ENCODE measurements at regions of chr12 and their contacts with region 1.

Region 1: GRCh38 chr12:64679487-64679983 is 69.2 kb downstream of the RASSF3 start:
- DNase-seq: peak; percentile 81
- H3K4me3 ChIP-seq: peak overlapping the region in 2 of 4 donors; percentile 5 to 27
- H3K27ac ChIP-seq: peak overlapping the region; percentile 80 to 90 (median 86)
- H3K4me1 ChIP-seq: peaks cover 55 to 83% (median 62%) of the 10 kb centered on the region in 4 donors
- H3K27me3 ChIP-seq: no peaks in the 10 kb centered on the region
- CTCF ChIP-seq: no peak
- EP300 ChIP-seq: no peak
- POLR2A ChIP-seq: no peak

Region 2: DNA sequence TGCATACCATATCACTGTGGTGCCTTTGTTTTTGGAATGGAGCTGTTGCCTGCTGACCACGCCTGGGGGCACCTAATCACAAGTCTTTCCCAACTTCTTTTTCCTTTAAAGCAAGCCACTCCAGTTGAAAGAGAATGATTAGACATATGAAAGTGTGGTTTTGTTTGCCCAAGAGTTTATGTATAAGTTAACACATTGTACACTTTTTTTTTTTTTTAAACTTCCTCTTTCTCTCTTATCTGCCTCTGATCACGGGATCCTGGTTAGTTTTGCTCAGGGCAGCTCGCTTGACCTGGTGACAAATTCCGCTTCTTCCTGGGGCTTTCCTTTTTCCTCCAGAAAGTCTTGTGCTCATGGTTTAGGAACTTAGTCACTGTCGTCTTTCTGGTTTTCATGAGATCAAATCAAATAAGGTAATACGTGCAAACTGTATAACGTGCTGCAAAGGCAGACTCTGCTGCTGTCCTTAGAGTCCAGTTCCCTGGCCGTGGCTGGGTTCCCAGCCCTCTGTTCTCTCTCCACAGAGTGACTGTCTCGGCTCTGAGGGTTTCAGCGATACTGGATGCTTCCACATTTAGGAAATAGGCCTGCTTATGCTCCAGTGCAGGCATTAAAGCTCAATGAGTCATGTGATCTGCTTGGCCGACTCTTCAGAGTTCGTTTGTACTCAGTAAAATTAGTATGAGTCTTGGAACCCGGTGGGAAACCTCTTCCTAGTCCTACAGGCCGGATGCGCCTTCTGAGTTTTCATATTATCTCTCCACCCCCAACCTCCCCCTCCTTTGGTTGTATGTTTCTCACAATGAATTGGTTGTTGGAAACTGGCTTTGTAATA is 54.1 kb before region 1 on chr12:
- in situ Hi-C with region 1: loop called in 1 of 4 experiments (anchors 10 kb)
- intact Hi-C with region 1: no loop called
- DNase-seq: peak; percentile 54
- H3K4me3 ChIP-seq: peak overlapping the region in 2 of 4 donors; percentile 12 to 44
- H3K27ac ChIP-seq: peak overlapping the region; percentile 84 to 95 (median 87)
- H3K4me1 ChIP-seq: peaks cover 32 to 84% (median 44%) of the 10 kb centered on the region in 4 donors
- H3K27me3 ChIP-seq: no peaks in the 10 kb centered on the region
- CTCF ChIP-seq: no peak
- EP300 ChIP-seq: peak; percentile 9
- POLR2A ChIP-seq: peak; percentile 39

Region 3: DNA sequence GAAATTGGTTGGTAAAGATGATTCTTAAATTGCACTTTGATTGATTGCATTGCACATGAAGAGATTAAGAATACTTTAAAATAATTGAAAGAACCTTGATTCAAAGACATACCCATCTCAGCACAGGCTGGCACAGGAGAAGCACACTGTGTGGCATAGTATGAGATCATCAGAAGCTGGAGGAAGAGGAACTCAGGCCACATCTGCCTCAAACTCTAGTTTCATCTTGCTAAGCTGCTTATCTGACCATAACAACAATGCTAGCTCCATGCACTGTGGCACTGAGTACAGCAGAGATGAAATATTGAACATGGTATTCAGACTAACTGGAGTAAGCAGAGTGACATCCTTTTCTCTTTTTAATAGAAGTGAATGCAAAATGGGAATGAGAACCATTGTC is 244.0 kb after region 1 on chr12:
- in situ Hi-C with region 1: no loop called
- intact Hi-C with region 1: no loop called
- DNase-seq: no peak
- H3K4me3 ChIP-seq: no peak overlapping the region
- H3K27ac ChIP-seq: no peak overlapping the region
- H3K4me1 ChIP-seq: no peaks in the 10 kb centered on the region
- H3K27me3 ChIP-seq: no peaks in the 10 kb centered on the region
- CTCF ChIP-seq: no peak
- EP300 ChIP-seq: no peak
- POLR2A ChIP-seq: no peak

Region 4: GRCh38 chr12:64976131-64976530 is 296.6 kb after region 1 on chr12:
- in situ Hi-C with region 1: no loop called
- intact Hi-C with region 1: no loop called
- DNase-seq: no peak
- H3K4me3 ChIP-seq: no peak overlapping the region
- H3K27ac ChIP-seq: no peak overlapping the region
- H3K4me1 ChIP-seq: no peaks in the 10 kb centered on the region
- H3K27me3 ChIP-seq: no peaks in the 10 kb centered on the region
- CTCF ChIP-seq: no peak
- EP300 ChIP-seq: no peak
- POLR2A ChIP-seq: no peak

Measured in transverse colon (tissue), 4 donors.